Activated naive CD4-positive, alpha-beta T cell treated with anti-CD3 and anti-CD28 coated beads for 36 hours (primary cell): ENCODE measurements at regions of chr15 and their contacts with region 1.

Region 1: DNA sequence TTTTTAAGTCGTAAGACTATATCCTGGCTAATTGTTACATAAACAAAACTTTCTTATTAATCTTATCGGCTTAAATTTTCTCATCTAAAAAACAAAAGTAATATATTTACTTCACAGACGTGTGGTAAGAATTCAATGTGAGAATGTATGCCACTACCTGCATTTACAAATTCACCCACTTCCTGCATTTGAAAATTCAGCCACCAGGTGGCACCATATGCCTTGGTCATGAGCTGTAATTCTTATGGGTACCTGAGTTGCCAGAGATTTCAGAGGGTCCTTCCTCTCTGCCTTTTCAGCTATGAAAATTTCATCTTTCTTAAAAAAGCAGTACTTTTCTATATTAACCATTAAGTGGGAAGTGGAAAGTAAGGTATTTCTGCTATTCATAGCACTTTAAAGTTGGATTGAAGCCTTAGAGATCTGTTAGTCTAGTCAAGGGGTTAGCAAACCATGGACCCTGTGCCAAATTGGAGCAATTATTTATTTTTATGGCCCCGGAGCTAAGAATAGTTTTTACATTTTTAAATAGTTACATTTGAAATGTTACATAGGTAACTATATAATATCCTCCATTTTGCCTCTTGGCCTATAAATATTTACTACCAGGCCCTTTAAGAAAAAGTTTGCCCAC is 127.8 kb downstream of the HCN4 start:
- DNase-seq: peak; percentile 89
- H3K4me3 Mint-ChIP-seq: no peak overlapping the region
- H3K27ac Mint-ChIP-seq: no peak overlapping the region
- H3K4me1 Mint-ChIP-seq: no peaks in the 10 kb centered on the region
- H3K27me3 Mint-ChIP-seq: no peaks in the 10 kb centered on the region

Region 2: DNA sequence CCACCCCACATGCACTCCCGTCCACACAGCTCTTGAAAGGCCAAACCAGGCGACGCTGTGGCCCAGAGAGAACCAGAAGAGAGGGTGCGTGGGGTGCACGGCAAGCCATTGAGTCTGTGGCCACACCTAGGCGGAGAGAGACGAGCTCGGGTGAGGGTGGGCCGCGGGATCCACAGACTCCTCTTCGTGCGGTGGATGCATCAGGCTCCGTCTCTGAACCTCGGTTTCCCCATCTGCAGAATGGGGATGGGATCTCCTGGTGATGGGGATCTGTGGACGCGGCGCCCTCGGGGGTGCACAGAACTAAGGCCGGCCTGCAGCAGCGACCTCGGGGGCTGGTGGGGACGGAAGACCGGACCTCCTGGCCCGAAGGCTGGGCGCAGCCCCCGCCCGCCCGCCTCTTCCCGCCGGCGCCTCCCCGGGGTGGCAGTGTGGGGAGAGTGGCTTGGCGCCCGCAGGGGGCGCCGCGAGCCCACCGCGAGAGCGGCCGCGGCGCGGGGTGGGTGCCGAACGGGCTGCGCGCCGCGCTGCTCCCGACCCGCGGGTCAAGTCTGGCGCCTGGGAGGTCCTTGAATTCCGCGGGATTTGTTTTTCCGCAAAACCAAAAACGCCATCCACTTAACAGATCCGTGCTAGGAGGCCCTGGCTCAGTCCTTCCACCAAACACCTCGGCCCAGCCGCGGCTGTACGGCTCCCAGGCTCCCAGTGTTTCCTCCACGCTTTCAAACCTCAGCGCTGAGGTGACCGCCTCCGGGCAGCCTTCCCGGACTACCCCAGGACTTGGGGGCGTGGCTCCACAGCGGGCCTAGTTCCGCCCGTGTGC is 444.3 kb before region 1 on chr15:
- CTCF ChIA-PET with region 1: no interaction called
- intact Hi-C with region 1: loop called (anchors 2 kb)
- DNase-seq: peak; percentile 26
- H3K4me3 Mint-ChIP-seq: peak overlapping the region; percentile 70
- H3K27ac Mint-ChIP-seq: no peak overlapping the region
- H3K4me1 Mint-ChIP-seq: peaks cover 3% of the 10 kb centered on the region
- H3K27me3 Mint-ChIP-seq: peaks cover 20% of the 10 kb centered on the region

Region 3: GRCh38 chr15:73051811-73052678 is 188.9 kb before region 1 on chr15 and contains the start of gene NEO1:
- CTCF ChIA-PET with region 1: no interaction called
- intact Hi-C with region 1: loop called (anchors 5 kb)
- DNase-seq: peak; percentile 81
- H3K4me3 Mint-ChIP-seq: peak within 1 kb of the TSS; percentile 77
- H3K27ac Mint-ChIP-seq: no peak within 1 kb of the TSS
- H3K4me1 Mint-ChIP-seq: peaks cover 6% of the 10 kb centered on the region
- H3K27me3 Mint-ChIP-seq: peaks cover 8% of the 10 kb centered on the region
- total RNA-seq, gene NEO1: 4.3 to 4.4 TPM

Region 4: GRCh38 chr15:73265536-73266153 is 24.7 kb after region 1 on chr15:
- CTCF ChIA-PET with region 1: interaction called, 21 read pairs
- intact Hi-C with region 1: no loop called
- DNase-seq: peak; percentile 75
- H3K4me3 Mint-ChIP-seq: no peak overlapping the region
- H3K27ac Mint-ChIP-seq: no peak overlapping the region
- H3K4me1 Mint-ChIP-seq: peaks cover 2% of the 10 kb centered on the region
- H3K27me3 Mint-ChIP-seq: no peaks in the 10 kb centered on the region

Region 5: GRCh38 chr15:73273181-73274002 is 32.4 kb after region 1 on chr15:
- CTCF ChIA-PET with region 1: interaction called, 16 read pairs
- intact Hi-C with region 1: loop called (anchors 1 kb)
- DNase-seq: peak; percentile 64
- H3K4me3 Mint-ChIP-seq: no peak overlapping the region
- H3K27ac Mint-ChIP-seq: no peak overlapping the region
- H3K4me1 Mint-ChIP-seq: peaks cover 4% of the 10 kb centered on the region
- H3K27me3 Mint-ChIP-seq: no peaks in the 10 kb centered on the region